ENCODE measurements at regions of chr9 and their contacts with region 1.

Region 1: DNA sequence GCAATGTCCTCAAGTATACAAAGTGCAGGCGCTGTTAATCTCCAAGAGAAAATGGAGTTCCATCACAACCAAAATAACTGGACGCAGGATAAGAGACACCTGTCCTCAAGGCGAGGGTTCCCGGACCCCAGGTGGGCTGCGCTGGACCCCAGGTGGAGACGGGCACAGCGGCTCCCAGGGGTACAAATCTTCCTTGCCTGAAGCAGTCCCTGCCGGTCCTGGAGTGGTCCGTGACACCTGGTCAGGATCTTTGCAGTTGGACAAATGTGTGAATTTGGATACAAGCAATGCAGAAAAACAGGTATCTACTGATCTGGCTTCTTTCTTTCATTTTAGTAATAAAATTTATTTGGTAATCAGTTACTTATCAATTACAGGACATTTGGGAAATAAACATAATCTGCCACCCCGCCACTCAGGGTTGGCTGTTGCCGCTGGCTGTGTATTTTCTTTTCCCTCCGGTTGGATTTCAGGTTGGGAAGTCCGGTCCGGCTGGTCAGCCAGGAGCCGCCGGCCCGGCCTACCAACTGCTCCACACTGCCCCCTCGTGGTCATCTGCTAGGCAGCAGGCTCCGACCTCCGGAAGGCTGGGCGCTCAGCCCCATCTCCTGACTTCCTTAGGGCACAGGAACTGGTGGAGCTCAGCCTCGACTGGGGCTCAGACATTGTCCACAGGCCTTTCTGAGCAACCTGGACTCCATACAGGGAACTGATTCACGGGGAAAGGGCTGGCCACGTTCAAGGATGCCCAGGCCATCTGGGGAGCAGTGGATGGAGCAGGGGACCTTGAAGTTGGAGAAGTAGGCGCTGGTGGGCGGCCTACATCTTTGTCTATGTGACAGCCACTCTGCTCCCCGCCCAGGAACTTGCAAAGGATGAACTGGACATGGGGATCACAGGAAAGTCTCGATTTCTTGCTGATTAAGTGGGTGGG is 43.4 kb downstream of the NXNL2 start:
- ATAC-seq: peak; percentile 74 to 96 (median 88)
- H3K4me3 ChIP-seq: no peak overlapping the region
- H3K27ac ChIP-seq: no peak overlapping the region
- H3K4me1 ChIP-seq: peaks cover 6 to 8% of the 10 kb centered on the region in 2 donors

Region 2: DNA sequence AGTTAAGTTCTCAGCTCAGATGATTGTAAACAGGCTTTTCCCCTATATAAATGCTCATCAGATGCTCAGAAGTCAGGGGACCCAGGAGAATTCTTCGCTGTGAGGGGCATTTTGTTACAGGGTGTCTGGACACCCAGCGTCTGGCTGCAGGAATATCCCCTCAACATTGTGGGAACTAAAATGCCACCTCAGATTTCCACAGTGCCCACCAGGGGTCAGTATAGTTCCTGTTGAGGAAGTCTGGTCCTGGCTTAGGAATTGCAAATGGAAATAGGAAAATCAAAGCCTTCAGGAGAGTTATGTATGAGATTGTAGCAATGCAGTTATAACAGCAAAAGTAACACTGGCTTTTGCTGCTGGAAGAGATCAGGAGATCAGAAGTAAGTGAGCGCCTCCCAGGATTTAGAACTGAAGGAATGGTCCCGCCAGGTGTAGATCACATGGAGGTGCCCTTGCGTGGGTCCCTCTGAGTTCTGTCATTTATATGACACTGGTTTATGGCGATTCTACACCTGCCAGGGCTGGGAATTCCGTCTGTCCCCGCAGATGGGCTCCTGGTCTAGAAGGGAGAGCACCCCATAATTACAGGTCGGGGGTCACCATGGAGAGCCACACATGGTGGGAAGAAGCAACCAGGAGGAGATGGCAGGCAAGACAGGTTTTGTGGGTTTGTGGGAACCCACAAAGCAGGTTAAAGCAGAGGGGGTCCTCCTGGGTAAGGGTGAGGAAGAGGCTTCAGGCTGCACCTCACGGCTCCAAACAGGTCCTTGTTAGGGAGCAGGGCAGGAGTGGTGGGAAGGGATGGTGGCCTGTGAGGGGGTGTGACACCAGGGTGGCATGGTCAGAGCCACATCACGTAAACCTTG is 899.5 kb before region 1 on chr9:
- in situ Hi-C with region 1: loop called in 1 of 9 experiments (anchors 25 kb)
- ATAC-seq: peak; percentile 52 to 75 (median 72)
- H3K4me3 ChIP-seq: no peak overlapping the region
- H3K27ac ChIP-seq: no peak overlapping the region
- H3K4me1 ChIP-seq: peaks cover 3 to 6% of the 10 kb centered on the region in 2 donors

Region 3: DNA sequence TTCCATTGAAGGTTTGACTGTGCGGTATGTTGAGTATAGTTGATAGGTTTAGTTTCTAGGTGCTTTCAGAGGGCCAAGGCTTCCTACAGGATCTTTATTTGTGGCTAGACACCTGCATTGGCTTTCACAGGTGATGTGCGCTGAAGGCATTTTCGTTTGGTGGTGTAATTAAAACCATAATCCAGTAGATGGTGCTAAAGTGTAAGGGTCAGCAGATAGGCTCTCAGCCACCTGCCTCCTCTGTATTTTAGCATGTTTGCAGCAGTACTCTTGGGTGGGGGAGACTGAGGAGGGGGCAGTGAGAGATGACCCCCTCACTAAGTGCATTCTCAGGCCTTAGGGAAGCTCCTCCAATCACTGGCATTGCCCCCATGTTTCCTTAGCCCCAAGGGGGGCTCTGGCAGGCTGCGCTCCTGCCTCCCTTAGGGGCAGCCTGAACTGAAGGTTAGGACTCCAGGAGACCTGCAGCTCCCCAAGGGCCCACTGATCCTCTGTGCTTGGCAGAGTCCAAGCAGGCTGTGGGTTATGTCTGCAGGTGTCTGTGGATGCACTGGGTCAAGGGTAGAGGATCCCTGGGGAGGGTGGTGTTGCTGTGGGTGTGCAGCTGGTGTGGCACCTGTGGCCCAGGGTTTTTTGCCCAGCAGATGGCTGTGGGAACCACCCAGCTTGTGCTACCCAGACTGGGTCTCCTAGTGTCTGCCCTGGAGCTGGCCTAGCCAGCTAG is 627.5 kb before region 1 on chr9:
- in situ Hi-C with region 1: loop called in 2 of 9 experiments (anchors 25 kb)
- ATAC-seq: peak in 4 of 8 experiments; percentile 14 to 68 (median 43)
- H3K4me3 ChIP-seq: no peak overlapping the region
- H3K27ac ChIP-seq: no peak overlapping the region
- H3K4me1 ChIP-seq: no peaks in the 10 kb centered on the region

Region 4: GRCh38 chr9:88660611-88661010 is 82.2 kb after region 1 on chr9:
- in situ Hi-C with region 1: no loop called
- ATAC-seq: peak in 3 of 8 experiments; percentile 32 to 53 (median 41)
- H3K4me3 ChIP-seq: no peak overlapping the region
- H3K27ac ChIP-seq: no peak overlapping the region
- H3K4me1 ChIP-seq: peaks cover 0 to 5% of the 10 kb centered on the region in 2 donors

Region 5: DNA sequence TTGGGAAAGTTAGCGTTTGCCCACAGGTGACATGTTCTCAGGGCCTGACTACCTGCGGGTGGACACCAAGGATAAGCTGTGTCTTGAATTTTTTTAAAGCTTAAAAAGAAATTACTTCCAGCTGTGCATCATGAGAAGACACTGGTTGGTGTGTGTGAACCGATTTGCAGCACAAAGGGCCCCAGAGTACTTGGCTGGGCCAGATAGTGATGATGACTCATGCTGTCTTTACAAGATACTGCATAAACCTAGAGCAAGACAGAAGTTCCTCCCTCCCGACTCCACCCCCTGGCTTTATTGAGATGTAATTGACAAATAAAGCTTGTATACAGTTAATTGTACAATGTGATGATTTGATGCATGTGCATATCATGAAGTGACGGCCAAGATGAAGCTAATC is 169.4 kb after region 1 on chr9:
- in situ Hi-C with region 1: loop called in 1 of 9 experiments (anchors 25 kb)
- ATAC-seq: peak; percentile 82 to 99 (median 93)
- H3K4me3 ChIP-seq: no peak overlapping the region
- H3K27ac ChIP-seq: no peak overlapping the region
- H3K4me1 ChIP-seq: peaks cover 15% of the 10 kb centered on the region in 2 donors

Region 6: GRCh38 chr9:88991066-88992034 is 413.0 kb after region 1 on chr9 and contains the start of gene S1PR3:
- in situ Hi-C with region 1: loop called in 2 of 9 experiments (anchors 25 kb)
- ATAC-seq: peak; percentile 66 to 85 (median 79)
- H3K4me3 ChIP-seq: peak within 1 kb of the TSS; percentile 32 to 61 (median 47)
- H3K27ac ChIP-seq: no peak within 1 kb of the TSS
- H3K4me1 ChIP-seq: peaks cover 7 to 8% of the 10 kb centered on the region in 2 donors
- total RNA-seq, gene S1PR3: 0.54 to 117 (median 4.2) TPM

Region 7: DNA sequence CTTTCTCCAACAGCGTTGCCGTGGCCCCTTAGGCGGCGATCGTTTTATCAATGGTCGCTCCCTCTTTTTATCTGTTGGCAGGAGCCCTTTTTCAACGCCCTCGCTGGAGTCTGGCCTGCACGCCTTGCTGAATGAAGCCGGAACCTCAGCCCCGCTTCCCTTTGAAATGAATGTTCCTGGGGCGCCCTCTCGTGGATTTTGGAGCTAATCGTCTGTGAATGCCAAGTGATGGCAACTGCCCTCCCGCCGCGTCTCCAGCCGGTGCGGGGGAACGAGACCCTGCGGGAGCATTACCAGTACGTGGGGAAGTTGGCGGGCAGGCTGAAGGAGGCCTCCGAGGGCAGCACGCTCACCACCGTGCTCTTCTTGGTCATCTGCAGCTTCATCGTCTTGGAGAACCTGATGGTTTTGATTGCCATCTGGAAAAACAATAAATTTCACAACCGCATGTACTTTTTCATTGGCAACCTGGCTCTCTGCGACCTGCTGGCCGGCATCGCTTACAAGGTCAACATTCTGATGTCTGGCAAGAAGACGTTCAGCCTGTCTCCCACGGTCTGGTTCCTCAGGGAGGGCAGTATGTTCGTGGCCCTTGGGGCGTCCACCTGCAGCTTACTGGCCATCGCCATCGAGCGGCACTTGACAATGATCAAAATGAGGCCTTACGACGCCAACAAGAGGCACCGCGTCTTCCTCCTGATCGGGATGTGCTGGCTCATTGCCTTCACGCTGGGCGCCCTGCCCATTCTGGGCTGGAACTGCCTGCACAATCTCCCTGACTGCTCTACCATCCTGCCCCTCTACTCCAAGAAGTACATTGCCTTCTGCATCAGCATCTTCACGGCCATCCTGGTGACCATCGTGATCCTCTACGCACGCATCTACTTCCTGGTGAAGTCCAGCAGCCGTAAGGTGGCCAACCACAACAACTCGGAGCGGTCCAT is 422.9 kb after region 1 on chr9:
- in situ Hi-C with region 1: loop called in 4 of 9 experiments (anchors 10 to 25 kb)
- ATAC-seq: peak; percentile 74 to 90 (median 84)
- H3K4me3 ChIP-seq: no peak overlapping the region
- H3K27ac ChIP-seq: no peak overlapping the region
- H3K4me1 ChIP-seq: peaks cover 13 to 16% of the 10 kb centered on the region in 2 donors

Measured in motor neuron (in vitro differentiated cells).